ENCODE measurements at regions of chr11 and their contacts with region 1.

Region 1: DNA sequence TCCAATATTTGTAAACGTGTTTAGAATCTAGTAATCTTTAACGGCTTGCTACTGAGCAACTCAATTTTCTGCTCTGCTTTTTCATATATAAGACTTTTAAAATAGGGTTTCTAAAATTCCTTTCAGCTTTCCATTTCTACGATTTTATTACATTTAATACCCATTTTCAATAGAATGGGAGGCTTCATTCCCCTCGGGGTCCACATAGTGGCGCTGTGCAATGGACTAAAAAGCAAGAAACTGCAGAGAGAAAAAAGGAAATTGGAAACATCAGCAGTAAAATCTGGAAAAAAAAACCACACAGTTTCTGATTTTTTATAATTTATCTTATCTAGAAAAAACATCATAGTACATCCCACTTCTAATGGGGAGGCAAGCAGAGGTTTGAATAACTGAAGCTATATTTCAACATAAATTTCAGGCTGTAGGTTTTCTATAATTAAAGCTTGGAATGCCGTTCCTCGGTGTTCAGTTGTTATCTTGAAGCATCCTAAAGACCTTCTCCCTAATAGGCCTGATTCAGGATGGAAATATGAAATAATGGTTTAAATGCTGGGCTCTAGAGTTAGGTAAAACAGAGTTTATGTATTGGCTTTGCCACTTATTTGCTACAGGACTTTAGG is 18.7 kb upstream of the JHY start:
- DNase-seq: peak; percentile 69
- ATAC-seq: peak; percentile 66

Region 2: GRCh38 chr11:122995526-122995925 is 131.7 kb after region 1 on chr11:
- intact Hi-C with region 1: no loop called
- DNase-seq: no peak
- ATAC-seq: no peak

Region 3: DNA sequence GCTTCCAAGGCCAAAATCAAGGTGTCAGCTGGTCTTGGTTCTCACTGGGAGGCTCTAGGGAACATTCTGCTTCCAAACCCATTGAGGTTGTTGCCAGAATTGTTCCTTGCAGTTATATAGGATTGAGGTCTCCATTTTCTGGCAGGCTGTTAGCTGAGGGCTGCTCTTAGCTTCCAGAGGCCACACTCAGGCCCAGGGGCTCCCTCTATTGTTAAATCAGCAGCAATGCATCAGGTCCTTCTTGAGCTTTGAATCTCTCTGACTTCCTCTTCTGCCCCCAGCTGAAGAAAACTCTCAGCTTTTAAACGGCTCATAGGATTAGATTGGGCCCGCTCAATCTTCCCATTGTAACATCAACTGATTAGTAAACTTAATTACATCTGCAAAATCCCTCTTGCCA is 157.2 kb after region 1 on chr11:
- intact Hi-C with region 1: loop called (anchors 10 kb)
- DNase-seq: no peak
- ATAC-seq: no peak

Region 4: DNA sequence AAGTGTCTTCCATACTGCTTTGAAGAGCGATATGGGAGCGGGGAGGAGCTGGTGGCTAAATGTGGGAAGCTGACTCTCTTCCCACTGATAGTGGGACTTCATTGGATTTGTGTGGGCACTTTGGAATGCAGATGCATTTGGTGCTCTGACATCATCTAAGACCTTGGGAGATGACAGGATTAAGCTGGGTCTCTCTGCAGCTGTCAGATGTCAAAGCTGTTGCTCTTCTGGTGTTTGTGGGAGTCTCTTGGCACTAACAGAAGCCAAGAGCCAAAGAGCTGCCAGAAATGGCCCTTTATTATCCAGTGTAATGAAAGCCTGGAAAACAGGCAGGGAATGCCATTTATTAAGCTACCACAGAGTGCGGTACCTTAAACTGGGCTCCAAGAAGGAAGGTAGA is 586.8 kb after region 1 on chr11:
- intact Hi-C with region 1: no loop called
- DNase-seq: no peak
- ATAC-seq: no peak

Measured in sciatic nerve (tissue), 2 donors.